Psoas muscle (tissue), 8 donors: ENCODE measurements at regions of chr22 and their contacts with region 1.

Region 1: GRCh38 chr22:19143967-19144400 is 467 bp downstream of the ESS2 start:
- DNase-seq: no peak
- ATAC-seq: peak in 1 of 4 donors; percentile 10
- H3K4me3 ChIP-seq: peak overlapping the region; percentile 92
- H3K27ac ChIP-seq: peak overlapping the region; percentile 68
- H3K4me1 ChIP-seq: peaks cover 12% of the 10 kb centered on the region
- H3K27me3 ChIP-seq: peaks cover 0 to 17% (median 7%) of the 10 kb centered on the region in 3 donors
- CTCF ChIP-seq: no peak

Region 2: DNA sequence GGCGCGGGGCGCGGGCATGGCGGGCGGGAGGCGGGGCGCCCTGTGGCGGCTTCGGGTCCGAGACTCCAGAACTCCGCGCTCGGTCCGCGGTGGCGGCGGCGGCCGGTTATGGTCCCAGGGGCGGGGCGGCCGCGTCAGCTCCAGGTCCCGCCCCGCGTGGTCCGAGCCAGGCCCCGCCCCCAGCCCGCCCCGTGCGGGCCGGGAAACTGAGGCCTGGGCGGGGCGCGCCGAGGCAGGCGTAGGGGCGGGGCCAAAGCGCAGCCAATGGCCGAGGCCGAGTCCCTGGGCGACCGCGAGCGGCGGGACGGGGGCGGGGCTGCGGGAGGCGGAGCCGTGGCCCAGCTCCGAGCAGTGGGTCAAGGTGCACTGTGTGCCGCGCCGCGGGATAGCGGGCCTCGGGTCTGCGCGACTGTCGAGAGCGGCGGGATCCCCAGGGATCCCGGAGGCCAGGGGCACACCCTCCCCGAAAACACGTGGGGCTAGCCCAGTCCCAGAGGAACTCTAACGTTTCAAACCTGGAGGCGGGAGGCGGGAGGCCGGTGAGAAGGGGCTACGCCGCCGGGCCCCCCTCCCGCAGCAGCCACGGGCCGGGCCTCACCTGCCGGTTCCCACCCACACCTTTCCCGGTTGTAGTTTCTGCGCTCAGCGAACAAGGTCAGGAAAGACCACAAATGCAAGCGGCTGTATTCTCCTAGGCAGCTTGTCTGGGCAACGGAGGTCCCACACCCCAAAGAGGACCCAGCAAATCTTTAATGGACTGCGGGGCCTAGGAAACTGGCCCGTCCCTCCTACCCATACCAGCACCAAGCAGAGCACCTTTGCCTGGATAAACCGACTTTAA is 34.9 kb after region 1 on chr22 and contains the start of gene SLC25A1:
- intact Hi-C with region 1: loop called in 1 of 2 experiments (anchors 5 kb)
- DNase-seq: peak; percentile 93 to 95
- ATAC-seq: peak; percentile 68 to 86 (median 76)
- H3K4me3 ChIP-seq: peak within 1 kb of the TSS; percentile 73
- H3K27ac ChIP-seq: peak within 1 kb of the TSS; percentile 82
- H3K4me1 ChIP-seq: peaks cover 21% of the 10 kb centered on the region
- H3K27me3 ChIP-seq: no peaks in the 10 kb centered on the region
- CTCF ChIP-seq: no peak
- total RNA-seq, gene SLC25A1: 7.3 to 23.1 (median 13.0) TPM